PC-9 (cell line): ENCODE measurements at regions of chr4 and their contacts with region 1.

Region 1: DNA sequence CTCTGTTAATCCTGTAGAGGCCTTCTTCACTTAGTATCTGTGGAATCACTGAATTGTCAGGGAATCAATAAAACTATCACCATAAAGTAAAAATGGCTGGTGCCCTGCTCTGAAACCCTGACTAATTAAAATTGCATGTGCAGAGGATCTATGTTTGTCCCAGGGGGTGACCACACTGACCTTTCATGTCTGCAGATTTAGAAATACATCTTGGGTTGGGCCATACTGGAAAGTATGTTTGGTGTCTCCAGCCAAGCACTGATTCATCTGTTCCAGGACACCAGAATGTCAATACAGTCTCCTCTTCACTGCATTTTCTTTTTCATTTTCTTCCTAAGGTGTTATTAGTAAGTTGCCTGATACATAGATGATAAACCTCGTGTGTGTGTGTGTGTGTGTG is 490.9 kb upstream of the INTU start:
- DNase-seq: no peak
- H3K4me3 ChIP-seq: no peak overlapping the region
- H3K27ac ChIP-seq: no peak overlapping the region
- H3K4me1 ChIP-seq: no peaks in the 10 kb centered on the region
- H3K27me3 ChIP-seq: no peaks in the 10 kb centered on the region
- CTCF ChIP-seq: no peak

Region 2: DNA sequence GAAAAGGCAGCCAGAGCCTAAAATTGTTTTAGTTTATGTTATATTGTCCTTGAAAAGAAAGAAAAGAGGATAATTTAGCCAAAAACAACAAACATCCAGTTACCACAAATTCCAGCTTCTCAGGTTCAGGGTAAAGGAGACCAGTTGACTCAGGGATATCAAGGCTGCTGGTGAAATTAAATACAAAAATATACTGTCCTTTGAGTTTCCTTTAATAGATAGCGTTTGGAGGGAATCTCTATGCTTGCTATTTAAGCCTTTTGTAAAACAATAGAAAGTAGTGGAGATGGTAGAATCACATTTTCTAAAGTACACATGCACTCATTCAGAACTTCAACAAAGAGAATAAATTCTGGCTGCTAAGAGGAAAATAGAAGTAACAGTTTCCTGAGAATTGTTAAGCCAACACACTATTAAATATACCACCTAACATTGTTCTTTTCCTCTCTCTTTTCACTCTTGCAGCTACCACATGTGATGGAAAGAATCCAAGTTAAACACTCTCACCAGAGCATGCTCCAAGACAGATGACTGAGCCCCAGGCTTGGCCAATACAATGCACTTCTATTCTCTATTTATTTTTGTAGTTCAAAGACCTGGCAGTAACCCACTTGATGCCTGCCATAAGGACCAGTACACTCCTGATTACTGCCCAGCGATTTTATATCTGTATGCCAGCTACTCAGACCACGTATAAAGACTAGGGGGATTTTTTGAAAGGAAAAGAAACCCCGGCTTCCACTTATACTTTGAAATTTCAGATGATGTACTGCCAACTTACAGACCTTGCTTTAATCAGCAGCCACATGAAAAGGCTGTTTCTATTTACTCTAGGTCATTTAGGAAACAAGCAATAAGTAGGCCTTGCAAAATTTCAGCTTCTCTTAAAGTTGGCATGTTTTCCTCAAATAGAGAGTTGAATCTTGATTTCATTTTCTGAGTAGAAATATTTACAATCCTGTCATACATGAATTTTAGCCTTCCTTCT is 1070.2 kb before region 1 on chr4:
- CTCF ChIA-PET with region 1: interaction called, 10 read pairs
- POLR2A ChIA-PET with region 1: no interaction called
- intact Hi-C with region 1: no loop called
- DNase-seq: no peak
- H3K4me3 ChIP-seq: no peak overlapping the region
- H3K27ac ChIP-seq: no peak overlapping the region
- H3K4me1 ChIP-seq: no peaks in the 10 kb centered on the region
- H3K27me3 ChIP-seq: no peaks in the 10 kb centered on the region
- CTCF ChIP-seq: no peak

Region 3: DNA sequence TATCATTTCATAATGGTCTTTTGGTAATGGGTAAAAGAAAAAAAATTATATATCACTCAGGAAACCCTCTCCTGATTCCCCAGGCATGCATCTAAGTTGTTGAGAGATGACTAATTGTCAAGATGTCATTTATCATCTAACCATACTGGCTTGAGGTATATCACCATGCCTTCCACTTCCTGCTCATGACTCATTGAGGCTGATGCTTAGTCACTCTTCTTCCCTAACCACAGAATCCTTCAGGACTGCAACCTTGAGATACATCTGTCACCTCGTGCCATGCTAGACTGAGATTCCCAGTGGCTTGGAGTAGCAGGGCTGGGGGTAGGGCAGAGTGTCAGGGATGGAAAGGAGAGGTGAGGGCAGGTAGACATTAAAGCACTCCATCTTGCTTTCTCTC is 291.6 kb before region 1 on chr4:
- CTCF ChIA-PET with region 1: no interaction called
- POLR2A ChIA-PET with region 1: no interaction called
- intact Hi-C with region 1: loop called (anchors 5 kb)
- DNase-seq: peak; percentile 71 to 93
- H3K4me3 ChIP-seq: no peak overlapping the region
- H3K27ac ChIP-seq: peak overlapping the region; percentile 70
- H3K4me1 ChIP-seq: peaks cover 19% of the 10 kb centered on the region
- H3K27me3 ChIP-seq: no peaks in the 10 kb centered on the region
- CTCF ChIP-seq: no peak